Sigmoid colon (tissue), 7 donors: ENCODE measurements at regions of chr19 and their contacts with region 1.

Region 1: DNA sequence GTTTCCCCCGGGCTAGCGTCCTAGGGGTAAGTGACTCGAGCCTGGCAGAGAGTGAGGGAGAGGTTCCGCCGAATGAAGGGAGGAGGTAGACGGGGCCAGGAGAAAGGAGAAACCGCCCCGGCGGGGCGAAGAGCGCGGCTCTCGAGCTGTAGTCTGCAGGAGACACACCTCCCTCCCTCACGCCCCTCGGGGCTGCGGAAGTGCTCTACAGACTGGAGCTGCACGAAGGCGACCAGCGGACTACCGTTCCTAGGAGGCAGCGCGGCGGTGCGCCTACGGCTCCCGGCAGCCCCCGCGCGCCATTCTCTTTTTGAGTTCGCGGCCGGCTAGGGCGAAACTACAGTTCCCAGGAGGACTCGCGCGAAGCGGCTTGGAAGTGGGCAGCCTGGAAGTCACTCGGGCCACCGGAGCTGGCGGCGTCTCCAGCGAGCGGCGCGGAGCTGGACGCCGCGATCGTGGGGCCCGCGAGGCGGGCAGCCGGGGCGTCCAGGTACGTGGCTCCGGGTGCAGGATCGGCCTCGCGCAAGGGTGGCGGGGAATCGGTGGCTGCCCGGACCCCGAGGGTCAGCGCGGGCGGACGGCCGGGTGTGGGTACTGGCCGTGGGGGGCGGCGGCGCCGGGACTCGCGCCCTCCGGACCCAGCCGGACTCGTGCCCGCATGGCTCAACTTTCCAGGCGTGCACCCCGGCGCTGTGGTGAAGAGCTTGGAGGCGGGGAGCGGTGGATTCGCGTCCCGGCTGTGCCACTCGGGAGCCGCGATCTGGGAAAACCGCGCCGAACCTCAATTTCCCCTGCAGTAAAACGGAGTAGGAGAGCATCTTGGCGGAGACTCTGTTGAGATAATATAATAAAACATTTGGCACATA is at the start of gene SIPA1L3:
- DNase-seq: peak; percentile 95
- H3K4me3 ChIP-seq: peak within 1 kb of the TSS; percentile 75 to 90 (median 86)
- H3K27ac ChIP-seq: peak within 1 kb of the TSS; percentile 71 to 81 (median 76)
- H3K4me1 ChIP-seq: peaks cover 0 to 19% (median 16%) of the 10 kb centered on the region in 4 donors
- H3K27me3 ChIP-seq: no peaks in the 10 kb centered on the region
- CTCF ChIP-seq: no peak
- EP300 ChIP-seq: no peak
- POLR2A ChIP-seq: no peak
- total RNA-seq, gene SIPA1L3: 7.7 to 9.9 (median 8.7) TPM

Region 2: GRCh38 chr19:37370880-37371661 is 536.0 kb before region 1 on chr19 and contains the start of gene ZNF527:
- intact Hi-C with region 1: loop called (anchors 1 kb)
- DNase-seq: peak; percentile 98
- H3K4me3 ChIP-seq: peak within 1 kb of the TSS; percentile 64 to 74 (median 66)
- H3K27ac ChIP-seq: peak within 1 kb of the TSS; percentile 83 to 91 (median 86)
- H3K4me1 ChIP-seq: peaks cover 0 to 14% (median 6%) of the 10 kb centered on the region in 4 donors
- H3K27me3 ChIP-seq: no peaks in the 10 kb centered on the region
- CTCF ChIP-seq: no peak
- EP300 ChIP-seq: peak in 1 of 4 donors; percentile 31
- POLR2A ChIP-seq: peak in 1 of 2 donors; percentile 90
- total RNA-seq, gene ZNF527: 6.1 to 13.8 (median 9.7) TPM

Region 3: GRCh38 chr19:38004521-38005223 is 97.6 kb after region 1 on chr19:
- intact Hi-C with region 1: loop called (anchors 10 kb)
- DNase-seq: peak; percentile 93
- H3K4me3 ChIP-seq: peak overlapping the region; percentile 1 to 46 (median 40)
- H3K27ac ChIP-seq: peak overlapping the region; percentile 67 to 85 (median 73)
- H3K4me1 ChIP-seq: peaks cover 0 to 24% (median 22%) of the 10 kb centered on the region in 4 donors
- H3K27me3 ChIP-seq: no peaks in the 10 kb centered on the region
- CTCF ChIP-seq: no peak
- EP300 ChIP-seq: no peak
- POLR2A ChIP-seq: peak in 1 of 2 donors; percentile 37

Region 4: GRCh38 chr19:38022791-38023670 is 115.9 kb after region 1 on chr19:
- intact Hi-C with region 1: no loop called
- DNase-seq: no peak
- H3K4me3 ChIP-seq: no peak overlapping the region
- H3K27ac ChIP-seq: no peak overlapping the region
- H3K4me1 ChIP-seq: peaks cover 0 to 5% (median 0%) of the 10 kb centered on the region in 4 donors
- H3K27me3 ChIP-seq: no peaks in the 10 kb centered on the region
- CTCF ChIP-seq: no peak
- EP300 ChIP-seq: no peak
- POLR2A ChIP-seq: no peak

Region 5: GRCh38 chr19:38095411-38096308 is 188.6 kb after region 1 on chr19:
- intact Hi-C with region 1: loop called (anchors 10 kb)
- DNase-seq: no peak
- H3K4me3 ChIP-seq: no peak overlapping the region
- H3K27ac ChIP-seq: no peak overlapping the region
- H3K4me1 ChIP-seq: peaks cover 0 to 4% (median 0%) of the 10 kb centered on the region in 4 donors
- H3K27me3 ChIP-seq: no peaks in the 10 kb centered on the region
- CTCF ChIP-seq: peak in 3 of 4 experiments; percentile 15 to 45 (median 20)
- EP300 ChIP-seq: no peak
- POLR2A ChIP-seq: no peak

Region 6: DNA sequence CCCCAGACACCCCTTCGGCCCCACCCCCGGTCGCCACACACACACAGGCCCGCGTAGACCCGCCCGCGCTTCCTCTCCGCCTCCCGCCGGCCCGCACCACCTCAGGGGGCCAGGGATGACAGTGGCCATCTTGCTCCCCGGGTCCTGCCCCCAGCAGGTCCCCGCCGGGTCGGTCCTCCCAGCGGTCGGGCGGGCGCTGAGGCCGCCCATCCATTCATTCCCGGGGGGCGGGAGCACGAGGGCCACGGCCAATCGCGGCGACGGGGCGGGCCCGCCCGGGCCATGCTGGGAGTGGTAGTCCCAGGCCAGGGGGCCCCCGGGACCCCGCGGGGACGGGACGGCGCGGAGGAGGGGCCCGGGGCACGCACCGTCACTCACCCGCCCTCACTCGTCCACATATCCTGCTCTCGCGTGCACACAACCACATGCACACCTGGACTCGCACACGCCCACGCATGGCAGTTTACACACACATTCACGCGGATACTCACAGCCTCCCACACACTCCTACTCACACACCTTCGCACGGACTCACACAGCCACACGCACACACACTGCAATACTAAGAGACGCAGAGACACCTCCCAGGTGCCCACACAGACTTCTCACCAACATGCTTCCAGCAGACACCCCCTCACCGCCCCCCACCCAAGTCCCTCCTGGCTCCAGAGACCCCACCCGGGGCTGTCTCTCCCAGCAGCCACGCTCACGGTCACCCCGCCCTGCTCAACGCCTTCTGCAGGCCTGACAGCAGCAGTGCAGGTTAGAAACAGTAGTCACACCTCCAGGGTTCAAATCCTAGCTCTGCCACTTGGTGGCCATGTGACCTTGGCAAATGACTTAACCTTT is 317.1 kb after region 1 on chr19 and contains the start of gene DPF1:
- intact Hi-C with region 1: loop called (anchors 10 kb)
- DNase-seq: no peak
- H3K4me3 ChIP-seq: peak within 1 kb of the TSS in 3 of 4 donors; percentile 18 to 45 (median 40)
- H3K27ac ChIP-seq: no peak within 1 kb of the TSS
- H3K4me1 ChIP-seq: peaks cover 0 to 23% (median 22%) of the 10 kb centered on the region in 4 donors
- H3K27me3 ChIP-seq: peaks cover 35 to 94% (median 70%) of the 10 kb centered on the region in 3 donors
- CTCF ChIP-seq: no peak
- EP300 ChIP-seq: no peak
- POLR2A ChIP-seq: no peak
- total RNA-seq, gene DPF1: not detected